ENCODE measurements at regions of chr4 and their contacts with region 1.

Region 1: GRCh38 chr4:138035781-138036258 is 206.3 kb downstream of the SLC7A11 start:
- DNase-seq: peak in 2 of 4 donors; percentile 9 to 31
- ATAC-seq: peak; percentile 92
- H3K4me3 ChIP-seq: no peak overlapping the region
- H3K27ac ChIP-seq: no peak overlapping the region
- H3K4me1 ChIP-seq: no peaks in the 10 kb centered on the region
- H3K27me3 ChIP-seq: no peaks in the 10 kb centered on the region
- CTCF ChIP-seq: peak; percentile 49 to 59

Region 2: GRCh38 chr4:137819964-137820383 is 215.8 kb before region 1 on chr4:
- intact Hi-C with region 1: no loop called
- DNase-seq: no peak
- ATAC-seq: peak; percentile 93
- H3K4me3 ChIP-seq: no peak overlapping the region
- H3K27ac ChIP-seq: no peak overlapping the region
- H3K4me1 ChIP-seq: no peaks in the 10 kb centered on the region
- H3K27me3 ChIP-seq: no peaks in the 10 kb centered on the region
- CTCF ChIP-seq: peak in 1 of 2 donors; percentile 37

Region 3: DNA sequence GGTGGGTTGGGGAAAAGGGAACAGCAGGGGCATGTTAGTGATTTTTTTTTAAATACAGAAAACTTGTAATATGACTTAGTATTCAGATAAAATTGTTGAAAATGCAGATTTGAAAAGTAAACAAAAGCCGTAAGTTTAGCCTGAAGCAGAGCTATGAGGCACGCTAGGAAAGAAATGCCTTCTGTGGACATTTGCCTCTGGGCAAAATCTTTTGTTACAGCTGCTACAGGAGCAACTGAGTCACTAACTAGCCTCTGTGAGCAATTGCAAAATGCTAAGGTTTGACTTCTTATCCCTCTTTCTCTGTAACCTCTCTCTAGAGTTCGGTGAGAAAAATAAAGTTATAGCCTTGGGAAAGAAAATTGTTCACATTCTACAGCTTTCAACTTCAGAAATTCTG is 143.7 kb before region 1 on chr4:
- intact Hi-C with region 1: no loop called
- DNase-seq: no peak
- ATAC-seq: no peak
- H3K4me3 ChIP-seq: no peak overlapping the region
- H3K27ac ChIP-seq: no peak overlapping the region
- H3K4me1 ChIP-seq: no peaks in the 10 kb centered on the region
- H3K27me3 ChIP-seq: no peaks in the 10 kb centered on the region
- CTCF ChIP-seq: no peak

Region 4: GRCh38 chr4:138087066-138087719 is 51.4 kb after region 1 on chr4:
- intact Hi-C with region 1: loop called in 1 of 2 experiments (anchors 10 kb)
- DNase-seq: no peak
- ATAC-seq: no peak
- H3K4me3 ChIP-seq: no peak overlapping the region
- H3K27ac ChIP-seq: no peak overlapping the region
- H3K4me1 ChIP-seq: no peaks in the 10 kb centered on the region
- H3K27me3 ChIP-seq: no peaks in the 10 kb centered on the region
- CTCF ChIP-seq: no peak

Region 5: GRCh38 chr4:138870737-138871554 is 835.1 kb after region 1 on chr4:
- intact Hi-C with region 1: loop called in 1 of 2 experiments (anchors 10 kb)
- DNase-seq: peak in 3 of 4 donors; percentile 37 to 83 (median 76)
- ATAC-seq: peak; percentile 94
- H3K4me3 ChIP-seq: no peak overlapping the region
- H3K27ac ChIP-seq: no peak overlapping the region
- H3K4me1 ChIP-seq: no peaks in the 10 kb centered on the region
- H3K27me3 ChIP-seq: no peaks in the 10 kb centered on the region
- CTCF ChIP-seq: peak; percentile 78 to 85

Measured in left lung (tissue), 14 donors.